ENCODE measurements at regions of chr4 and their contacts with region 1.

Region 1: DNA sequence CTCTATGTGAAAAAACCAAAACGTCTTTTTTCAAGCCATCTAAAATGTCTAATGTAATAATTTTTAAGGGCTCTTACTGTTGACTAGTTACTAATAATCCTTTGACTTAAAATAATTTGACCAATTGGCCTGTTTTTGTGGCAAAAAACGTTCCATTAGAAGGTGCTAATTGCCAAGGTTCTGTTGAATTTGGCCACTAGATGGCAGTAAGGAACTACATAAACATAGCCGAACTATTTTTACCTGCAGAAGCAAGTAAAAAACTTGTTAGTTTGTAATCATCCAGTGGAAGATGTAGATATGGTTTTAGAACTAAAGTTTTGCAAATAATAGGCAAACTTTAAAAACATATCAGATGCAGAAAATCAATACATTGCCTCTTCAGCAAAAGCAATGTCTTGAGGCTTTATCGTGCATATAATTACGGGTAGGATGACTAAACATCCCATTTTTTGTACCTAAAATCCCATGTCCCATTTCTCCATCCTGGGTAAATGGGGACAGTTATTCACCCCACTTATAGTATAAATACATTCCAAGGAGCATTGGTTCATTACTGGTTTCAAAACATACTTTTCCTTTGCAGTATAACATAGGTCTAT is 57.6 kb downstream of the PROM1 start:
- DNase-seq: peak; percentile 76
- H3K4me3 ChIP-seq: no peak overlapping the region
- H3K27ac ChIP-seq: no peak overlapping the region
- H3K4me1 ChIP-seq: peaks cover 3% of the 10 kb centered on the region
- H3K27me3 ChIP-seq: peaks cover 4 to 11% of the 10 kb centered on the region in 2 experiments
- CTCF ChIP-seq: peak; percentile 48 to 52
- POLR2A ChIP-seq: no peak

Region 2: DNA sequence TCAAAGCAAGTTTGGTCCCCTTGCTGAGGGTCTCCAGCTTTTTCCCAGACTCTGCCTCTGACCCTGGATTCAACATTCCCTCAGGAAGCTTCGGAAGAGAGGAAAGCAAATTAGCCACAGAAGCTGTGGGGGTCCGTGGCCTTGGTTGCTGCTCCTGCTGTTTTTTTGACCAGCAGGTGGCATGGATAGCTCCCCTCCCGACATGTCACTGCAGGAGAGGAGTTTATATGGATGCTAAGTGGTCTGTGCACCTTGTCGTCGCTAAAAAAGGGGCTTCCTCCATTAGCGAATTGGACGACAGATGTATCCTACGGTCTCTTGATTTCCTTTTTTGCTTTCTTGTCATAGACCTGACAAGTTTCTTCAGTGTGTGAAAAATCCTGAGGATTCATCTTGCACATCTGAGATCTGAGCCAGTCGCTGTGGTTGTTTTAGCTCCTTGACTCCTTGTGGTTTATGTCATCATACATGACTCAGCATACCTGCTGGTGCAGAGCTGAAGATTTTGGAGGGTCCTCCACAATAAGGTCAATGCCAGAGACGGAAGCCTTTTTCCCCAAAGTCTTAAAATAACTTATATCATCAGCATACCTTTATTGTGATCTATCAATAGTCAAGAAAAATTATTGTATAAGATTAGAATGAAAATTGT is 177.9 kb before region 1 on chr4:
- CTCF ChIA-PET with region 1: no interaction called
- POLR2A ChIA-PET with region 1: no interaction called
- dilution Hi-C with region 1: no loop called
- intact Hi-C with region 1: no loop called
- DNase-seq: no peak
- H3K4me3 ChIP-seq: no peak overlapping the region
- H3K27ac ChIP-seq: no peak overlapping the region
- H3K4me1 ChIP-seq: no peaks in the 10 kb centered on the region
- H3K27me3 ChIP-seq: no peaks in the 10 kb centered on the region
- CTCF ChIP-seq: no peak
- POLR2A ChIP-seq: no peak

Region 3: GRCh38 chr4:16140520-16141249 is 114.4 kb after region 1 on chr4:
- CTCF ChIA-PET with region 1: no interaction called
- POLR2A ChIA-PET with region 1: no interaction called
- dilution Hi-C with region 1: no loop called
- intact Hi-C with region 1: loop called (anchors 5 kb)
- DNase-seq: peak; percentile 86
- H3K4me3 ChIP-seq: no peak overlapping the region
- H3K27ac ChIP-seq: peak overlapping the region; percentile 22
- H3K4me1 ChIP-seq: peaks cover 11% of the 10 kb centered on the region
- H3K27me3 ChIP-seq: no peaks in the 10 kb centered on the region
- CTCF ChIP-seq: no peak
- POLR2A ChIP-seq: no peak

Region 4: DNA sequence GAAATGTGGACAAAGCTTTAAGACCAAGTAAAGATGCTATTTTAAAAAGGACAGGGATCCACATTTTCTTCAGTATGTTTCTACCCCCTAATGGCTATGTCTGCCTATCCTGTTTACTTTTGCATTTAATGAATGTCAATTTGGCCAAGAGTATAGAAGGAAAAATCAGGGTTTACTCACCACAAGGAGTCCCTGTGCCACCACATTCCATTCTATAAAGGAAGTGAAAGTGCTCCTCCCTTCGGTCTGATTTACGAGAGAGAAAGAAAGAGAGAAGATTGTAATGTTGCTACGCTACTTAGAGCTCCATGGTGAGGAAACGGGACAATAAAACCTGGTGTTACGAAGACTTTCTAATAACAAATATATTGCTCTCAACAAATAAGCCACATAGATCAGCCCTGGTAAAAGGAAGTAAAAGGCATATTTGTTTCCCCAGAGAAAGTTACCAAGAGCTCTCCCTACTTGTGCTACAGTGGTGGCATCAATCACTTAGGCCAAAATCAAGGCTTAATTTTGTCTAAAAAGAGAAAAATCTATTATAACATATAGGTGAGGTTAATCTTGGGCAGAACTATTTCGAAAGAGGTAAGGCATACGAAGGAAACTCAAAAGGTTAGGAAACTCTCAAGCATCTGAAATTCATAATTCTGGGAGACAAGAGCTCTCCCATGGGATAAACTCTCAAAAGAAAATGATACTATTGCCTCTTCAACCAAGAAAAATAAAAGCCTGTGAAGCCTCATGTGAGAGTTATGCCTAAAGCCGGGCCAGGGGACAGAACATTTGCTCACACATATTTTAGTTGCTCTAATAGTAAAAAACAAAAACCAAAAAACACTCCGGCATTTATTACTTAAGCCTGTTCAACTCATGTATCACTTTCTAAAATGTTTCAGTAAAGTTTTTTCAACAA is 170.5 kb after region 1 on chr4:
- CTCF ChIA-PET with region 1: interaction called, 33 read pairs
- POLR2A ChIA-PET with region 1: no interaction called
- dilution Hi-C with region 1: no loop called
- intact Hi-C with region 1: loop called (anchors 1 kb)
- DNase-seq: peak; percentile 83
- H3K4me3 ChIP-seq: peak overlapping the region in 2 of 3 experiments; percentile 34 to 67
- H3K27ac ChIP-seq: peak overlapping the region; percentile 68
- H3K4me1 ChIP-seq: peaks cover 27% of the 10 kb centered on the region
- H3K27me3 ChIP-seq: no peaks in the 10 kb centered on the region
- CTCF ChIP-seq: peak; percentile 28 to 32
- POLR2A ChIP-seq: no peak

Region 5: GRCh38 chr4:16205298-16206164 is 179.3 kb after region 1 on chr4:
- CTCF ChIA-PET with region 1: interaction called, 28 read pairs
- POLR2A ChIA-PET with region 1: no interaction called
- dilution Hi-C with region 1: no loop called
- intact Hi-C with region 1: loop called (anchors 1 kb)
- DNase-seq: peak; percentile 24
- H3K4me3 ChIP-seq: no peak overlapping the region
- H3K27ac ChIP-seq: no peak overlapping the region
- H3K4me1 ChIP-seq: no peaks in the 10 kb centered on the region
- H3K27me3 ChIP-seq: no peaks in the 10 kb centered on the region
- CTCF ChIP-seq: peak; percentile 40 to 54
- POLR2A ChIP-seq: no peak

Region 6: GRCh38 chr4:16443504-16444088 is 417.3 kb after region 1 on chr4:
- CTCF ChIA-PET with region 1: no interaction called
- POLR2A ChIA-PET with region 1: no interaction called
- dilution Hi-C with region 1: no loop called
- intact Hi-C with region 1: loop called (anchors 2 kb)
- DNase-seq: peak; percentile 47
- H3K4me3 ChIP-seq: no peak overlapping the region
- H3K27ac ChIP-seq: no peak overlapping the region
- H3K4me1 ChIP-seq: no peaks in the 10 kb centered on the region
- H3K27me3 ChIP-seq: peaks cover 9 to 10% of the 10 kb centered on the region in 2 experiments
- CTCF ChIP-seq: peak; percentile 56 to 63
- POLR2A ChIP-seq: no peak

Region 7: GRCh38 chr4:16598243-16599206 is 572.3 kb after region 1 on chr4:
- CTCF ChIA-PET with region 1: no interaction called
- POLR2A ChIA-PET with region 1: no interaction called
- dilution Hi-C with region 1: no loop called
- intact Hi-C with region 1: no loop called
- DNase-seq: peak; percentile 46
- H3K4me3 ChIP-seq: no peak overlapping the region
- H3K27ac ChIP-seq: peak overlapping the region; percentile 55
- H3K4me1 ChIP-seq: peaks cover 15% of the 10 kb centered on the region
- H3K27me3 ChIP-seq: no peaks in the 10 kb centered on the region
- CTCF ChIP-seq: no peak
- POLR2A ChIP-seq: no peak